GM10248 (cell line): ENCODE measurements at regions of chr4 and their contacts with region 1.

Region 1: GRCh38 chr4:24980064-24980690 is 50.6 kb downstream of the LGI2 start:
- DNase-seq: peak; percentile 59
- CTCF ChIP-seq: peak; percentile 66

Region 2: DNA sequence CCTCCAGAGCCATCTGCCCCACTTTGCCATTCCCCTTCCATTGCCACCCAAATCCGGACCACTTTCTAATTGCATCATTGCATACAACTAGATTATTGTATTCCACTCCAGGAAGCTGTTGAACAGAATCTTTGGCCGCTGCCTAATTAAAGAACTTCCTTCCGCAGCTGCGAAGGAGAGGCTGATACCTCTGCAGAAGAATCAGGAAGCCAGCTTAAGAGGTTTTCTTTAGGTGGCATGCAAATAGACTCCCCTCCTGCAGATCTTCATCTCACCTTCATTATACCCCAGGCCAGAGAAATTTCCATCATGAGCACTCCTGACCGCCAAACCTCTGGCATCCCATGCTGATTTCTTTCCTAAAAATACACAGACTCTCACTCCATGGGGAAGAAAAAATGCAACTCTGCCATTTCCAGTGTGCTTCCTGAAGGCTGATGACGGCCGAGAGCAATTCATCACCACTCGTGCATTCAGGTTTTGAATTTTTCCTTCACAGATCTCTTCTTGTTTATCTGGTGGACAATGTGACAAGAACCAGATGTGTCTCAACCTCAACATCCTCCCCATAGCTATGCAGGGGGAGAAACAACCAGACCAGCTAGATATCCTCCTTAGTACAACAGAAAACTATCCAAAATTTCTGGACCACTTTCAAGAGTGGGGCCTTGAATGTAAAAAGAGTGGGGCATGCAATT is 19.4 kb after region 1 on chr4:
- CTCF ChIA-PET with region 1: interaction called, 15 read pairs
- POLR2A ChIA-PET with region 1: no interaction called
- DNase-seq: no peak
- CTCF ChIP-seq: no peak

Region 3: DNA sequence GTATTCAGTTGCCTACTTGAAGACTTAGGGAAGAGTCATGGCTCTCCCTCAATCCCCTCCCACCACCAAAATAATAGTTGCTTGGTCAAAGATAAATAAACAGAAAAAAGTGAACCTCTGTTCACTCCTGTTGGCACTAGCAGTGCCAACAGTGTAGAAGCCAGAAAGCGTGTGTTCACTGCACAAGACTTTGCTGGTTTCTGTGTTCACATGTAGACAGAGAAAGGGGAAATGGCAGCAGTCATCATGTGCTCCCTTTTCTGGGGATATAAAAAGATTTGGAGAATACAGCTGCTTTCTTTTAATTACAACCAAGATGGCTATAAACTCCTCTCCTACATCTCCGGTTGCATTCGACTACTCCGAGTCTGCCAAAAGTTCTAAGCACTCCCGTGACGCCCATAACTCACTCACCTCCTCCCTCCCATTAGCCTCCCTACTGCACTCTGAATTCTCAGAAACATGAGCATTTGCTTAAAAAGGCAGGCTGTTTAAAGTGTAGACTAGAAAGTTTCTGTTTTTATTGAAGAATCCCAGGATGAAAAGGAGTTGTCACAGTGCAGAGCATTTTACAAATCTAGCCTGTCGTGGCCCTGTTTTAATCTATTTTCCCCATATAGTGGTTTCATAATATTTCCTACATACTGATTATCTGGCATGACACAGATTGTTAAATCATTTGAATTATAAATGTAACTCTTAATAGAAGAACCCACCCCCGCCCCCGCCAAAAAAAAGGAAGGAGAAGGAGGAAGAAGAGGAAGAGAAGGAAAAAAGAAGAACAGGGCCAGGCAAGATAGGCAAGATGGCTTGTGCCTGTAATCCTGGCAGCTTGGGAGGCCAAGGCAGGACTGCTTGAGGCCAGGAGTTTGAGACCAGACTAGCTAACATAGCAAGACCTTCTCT is 33.8 kb after region 1 on chr4:
- CTCF ChIA-PET with region 1: interaction called, 11 read pairs
- POLR2A ChIA-PET with region 1: no interaction called
- DNase-seq: no peak
- CTCF ChIP-seq: no peak

Region 4: DNA sequence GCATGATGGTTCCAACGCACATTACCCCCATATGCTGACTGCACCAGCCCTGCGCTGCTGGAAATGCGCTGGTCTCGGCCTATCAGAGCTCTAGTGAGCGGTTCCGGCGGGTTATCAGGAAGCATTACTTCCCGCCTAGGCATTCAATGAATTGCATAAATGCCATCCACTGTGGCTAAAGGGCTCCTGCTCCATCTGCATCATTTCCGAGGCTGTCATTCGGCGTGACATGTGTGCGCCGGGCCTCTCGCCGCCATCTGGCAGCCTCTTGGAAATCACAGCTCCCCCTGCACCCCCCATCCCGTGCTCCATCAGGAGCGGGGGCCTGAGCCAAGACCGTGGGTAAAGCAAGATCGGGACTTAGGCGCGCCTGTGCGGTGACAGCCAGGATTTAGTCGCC is 115.7 kb after region 1 on chr4:
- CTCF ChIA-PET with region 1: no interaction called
- POLR2A ChIA-PET with region 1: no interaction called
- DNase-seq: no peak
- CTCF ChIP-seq: no peak

Region 5: GRCh38 chr4:25144870-25145481 is 164.8 kb after region 1 on chr4:
- CTCF ChIA-PET with region 1: interaction called, 37 read pairs
- POLR2A ChIA-PET with region 1: no interaction called
- DNase-seq: peak; percentile 30
- CTCF ChIP-seq: peak; percentile 53

Region 6: DNA sequence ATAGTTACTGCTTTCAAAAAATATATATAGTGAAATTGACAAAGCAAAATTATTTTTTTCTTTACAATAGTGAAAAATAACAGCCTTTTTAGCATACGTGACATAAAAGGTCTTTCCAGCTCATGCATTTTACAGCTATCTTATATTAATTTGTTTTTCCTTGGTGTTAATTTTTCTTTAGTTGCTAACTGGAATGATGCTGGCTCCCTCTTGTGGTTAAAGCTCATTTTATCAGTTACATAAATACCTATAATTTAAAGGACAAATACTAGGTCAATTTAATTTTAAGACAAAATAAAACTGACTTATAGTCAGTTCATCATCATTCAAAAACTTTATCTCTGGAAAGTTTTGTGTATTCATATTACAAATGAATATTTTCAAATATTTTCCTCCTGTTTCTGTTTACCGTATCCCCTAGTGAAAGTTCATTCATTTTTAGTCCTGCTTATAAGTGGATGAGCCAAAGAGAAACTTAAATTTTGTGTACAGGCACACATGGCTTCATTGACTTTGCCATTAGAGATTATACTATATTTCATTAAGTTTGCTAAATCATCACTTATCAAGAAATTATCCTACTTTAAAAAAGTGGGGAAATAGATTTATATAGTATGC is 386.9 kb after region 1 on chr4:
- CTCF ChIA-PET with region 1: interaction called, 56 read pairs
- POLR2A ChIA-PET with region 1: no interaction called
- DNase-seq: peak; percentile 33
- CTCF ChIP-seq: peak; percentile 59